ENCODE measurements at regions of chr15 and their contacts with region 1.

Region 1: DNA sequence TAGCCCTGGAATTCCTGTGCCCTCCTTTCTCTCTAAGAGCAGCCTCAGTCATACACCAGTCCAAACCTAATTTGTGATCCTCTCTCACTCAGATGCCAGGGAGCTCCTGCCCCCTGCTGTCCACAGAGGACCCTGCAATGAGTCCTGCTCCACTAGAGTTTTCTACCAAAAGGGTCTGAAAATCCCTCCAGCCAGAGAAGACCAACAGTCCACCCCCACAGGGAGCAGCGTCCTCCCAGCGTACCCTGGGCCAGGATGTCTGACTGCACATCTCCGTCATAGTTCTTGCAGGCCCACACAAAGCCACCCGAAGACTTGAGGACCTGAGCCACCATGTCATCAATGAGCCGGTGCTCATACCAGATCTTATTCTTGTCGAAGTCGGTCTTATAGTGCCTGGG is 15.4 kb downstream of the IDH2 start:
- DNase-seq: peak in 1 of 2 donors; percentile 50
- ATAC-seq: peak; percentile 27 to 59 (median 41)
- H3K4me3 ChIP-seq: no peak overlapping the region
- H3K27ac ChIP-seq: peak overlapping the region; percentile 23
- H3K4me1 ChIP-seq: peaks cover 2% of the 10 kb centered on the region
- H3K27me3 ChIP-seq: no peaks in the 10 kb centered on the region
- CTCF ChIP-seq: peak; percentile 57

Region 2: DNA sequence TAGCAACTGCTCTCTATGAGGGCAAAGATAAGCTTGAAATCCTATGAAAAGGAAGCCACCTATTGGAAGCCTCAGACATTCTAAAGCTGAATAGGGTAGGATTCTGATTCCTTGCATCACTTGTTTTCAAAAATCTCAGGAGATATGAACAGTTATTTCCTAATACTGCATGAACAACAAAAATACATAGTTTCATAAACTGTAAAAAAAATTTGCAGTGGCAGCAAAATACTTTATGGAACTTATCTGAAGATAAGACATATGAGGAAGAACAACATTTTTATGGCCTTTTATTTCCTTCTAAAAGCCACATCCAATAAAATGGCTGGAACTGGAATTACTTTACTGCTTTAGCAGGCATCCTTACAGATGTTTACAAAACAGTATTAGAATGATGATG is 222.9 kb before region 1 on chr15:
- intact Hi-C with region 1: no loop called
- DNase-seq: no peak
- ATAC-seq: no peak
- H3K4me3 ChIP-seq: no peak overlapping the region
- H3K27ac ChIP-seq: no peak overlapping the region
- H3K4me1 ChIP-seq: peaks cover 9% of the 10 kb centered on the region
- H3K27me3 ChIP-seq: no peaks in the 10 kb centered on the region
- CTCF ChIP-seq: no peak

Region 3: DNA sequence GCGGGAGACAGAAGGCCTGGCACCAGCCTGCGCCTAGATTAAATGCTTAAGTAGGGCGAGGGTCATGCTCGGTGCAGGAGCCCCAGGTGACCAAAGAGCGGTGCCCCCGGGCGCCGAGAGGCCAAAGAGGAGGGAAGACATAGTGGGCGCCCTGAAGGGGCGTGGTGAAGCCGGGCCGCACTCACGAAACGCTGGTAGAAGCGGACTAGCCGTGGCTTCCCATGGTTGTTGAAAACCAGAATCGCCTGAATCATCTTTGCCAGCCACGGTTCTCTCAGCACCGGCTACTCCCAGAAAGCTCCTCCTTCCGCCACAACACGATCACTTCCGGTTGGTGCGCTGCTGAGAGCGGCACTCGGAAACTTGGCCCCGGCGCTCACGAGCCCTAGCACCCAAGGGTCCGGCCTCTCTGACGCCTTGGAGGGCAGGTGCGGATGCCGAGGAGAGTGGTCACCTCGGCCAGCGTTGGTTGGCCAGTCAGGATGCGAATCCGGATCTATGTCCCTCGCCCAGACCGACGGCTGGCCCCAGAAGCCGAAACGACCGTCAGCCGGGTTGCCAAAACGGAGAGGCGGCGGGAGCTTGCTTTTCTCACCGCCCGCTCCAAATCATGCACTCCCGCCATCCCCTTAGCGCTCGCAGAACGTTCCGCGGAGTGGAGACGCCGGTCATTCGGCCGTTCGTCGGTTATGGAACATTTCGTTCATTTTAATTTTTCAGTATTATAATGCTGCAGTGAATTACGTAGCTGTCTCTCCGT is 193.0 kb before region 1 on chr15 and contains the start of gene AP3S2:
- intact Hi-C with region 1: loop called in 1 of 2 experiments (anchors 5 kb)
- DNase-seq: peak; percentile 91 to 95
- ATAC-seq: peak; percentile 96 to 98 (median 98)
- H3K4me3 ChIP-seq: peak within 1 kb of the TSS; percentile 89
- H3K27ac ChIP-seq: peak within 1 kb of the TSS; percentile 88
- H3K4me1 ChIP-seq: peaks cover 14% of the 10 kb centered on the region
- H3K27me3 ChIP-seq: no peaks in the 10 kb centered on the region
- CTCF ChIP-seq: no peak
- total RNA-seq, gene AP3S2: 40.6 to 61.0 (median 46.6) TPM

Measured in psoas muscle (tissue), 8 donors.